ENCODE measurements at regions of chr5 and their contacts with region 1.

Region 1: DNA sequence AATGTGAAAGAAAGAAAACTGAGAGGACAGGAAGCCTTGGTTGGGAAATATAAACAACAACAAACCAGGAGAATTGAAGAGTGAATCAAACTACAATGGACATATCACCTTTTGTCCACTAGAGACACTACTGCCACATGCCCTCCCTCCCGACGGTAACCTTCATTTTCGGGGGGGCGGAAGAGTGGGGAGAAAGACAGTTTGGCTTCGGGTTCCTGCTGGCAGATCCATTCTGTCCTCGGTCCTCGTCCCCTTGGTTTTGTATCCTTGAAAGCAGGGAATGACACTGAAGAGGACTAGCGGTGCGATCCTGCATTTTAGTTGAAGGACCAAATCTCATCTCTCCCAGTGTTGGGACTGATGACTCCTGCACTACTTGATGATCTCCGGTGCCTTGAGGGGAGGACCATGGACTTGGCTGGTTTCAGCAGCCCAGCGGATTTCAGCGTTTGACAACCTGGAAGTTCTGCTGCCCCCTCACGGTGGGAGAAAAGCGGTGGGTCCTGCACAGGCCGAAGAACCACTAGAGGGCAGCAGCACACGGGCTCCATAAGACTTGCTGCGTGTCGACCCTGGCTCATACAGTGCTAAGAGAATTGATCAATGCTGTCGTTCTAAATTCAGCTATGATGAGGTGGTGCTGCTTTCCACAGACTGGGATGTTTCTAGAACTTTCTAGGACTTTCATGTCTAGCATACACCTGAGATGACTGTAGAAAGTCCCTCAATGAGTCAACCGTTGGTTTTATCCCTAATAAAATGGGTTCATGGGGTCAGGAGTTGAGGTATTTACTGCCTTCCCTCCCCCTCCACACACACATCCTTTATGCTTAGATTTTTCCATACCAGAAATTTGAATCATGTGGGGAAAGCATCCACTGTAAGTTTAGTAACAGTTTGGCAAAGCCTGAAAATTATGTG is 15.1 kb upstream of the ZNF131 start:
- DNase-seq: peak; percentile 95
- H3K4me3 ChIP-seq: peak overlapping the region; percentile 48 to 62 (median 51)
- H3K27ac ChIP-seq: peak overlapping the region; percentile 55 to 74 (median 64)
- H3K4me1 ChIP-seq: peaks cover 0 to 12% (median 9%) of the 10 kb centered on the region in 4 donors
- H3K27me3 ChIP-seq: no peaks in the 10 kb centered on the region
- CTCF ChIP-seq: peak; percentile 90 to 98 (median 98)
- EP300 ChIP-seq: no peak
- POLR2A ChIP-seq: no peak

Region 2: GRCh38 chr5:43073597-43074546 is 31.8 kb before region 1 on chr5:
- intact Hi-C with region 1: loop called (anchors 5 kb)
- DNase-seq: no peak
- H3K4me3 ChIP-seq: no peak overlapping the region
- H3K27ac ChIP-seq: no peak overlapping the region
- H3K4me1 ChIP-seq: peaks cover 12 to 18% (median 17%) of the 10 kb centered on the region in 4 donors
- H3K27me3 ChIP-seq: no peaks in the 10 kb centered on the region
- CTCF ChIP-seq: peak; percentile 24 to 67 (median 32)
- EP300 ChIP-seq: no peak
- POLR2A ChIP-seq: no peak

Measured in esophagus muscularis mucosa (tissue), 4 donors.